ENCODE measurements at regions of chr10 and their contacts with region 1.

Region 1: GRCh38 chr10:71319042-71319799 is at the start of gene SLC29A3:
- DNase-seq: peak; percentile 82 to 91 (median 85)
- H3K4me3 ChIP-seq: peak within 1 kb of the TSS; percentile 58 to 88 (median 81)
- H3K27ac ChIP-seq: peak within 1 kb of the TSS; percentile 7 to 50
- H3K4me1 ChIP-seq: peaks cover 3 to 43% (median 37%) of the 10 kb centered on the region in 4 experiments
- H3K27me3 ChIP-seq: no peaks in the 10 kb centered on the region

Region 2: DNA sequence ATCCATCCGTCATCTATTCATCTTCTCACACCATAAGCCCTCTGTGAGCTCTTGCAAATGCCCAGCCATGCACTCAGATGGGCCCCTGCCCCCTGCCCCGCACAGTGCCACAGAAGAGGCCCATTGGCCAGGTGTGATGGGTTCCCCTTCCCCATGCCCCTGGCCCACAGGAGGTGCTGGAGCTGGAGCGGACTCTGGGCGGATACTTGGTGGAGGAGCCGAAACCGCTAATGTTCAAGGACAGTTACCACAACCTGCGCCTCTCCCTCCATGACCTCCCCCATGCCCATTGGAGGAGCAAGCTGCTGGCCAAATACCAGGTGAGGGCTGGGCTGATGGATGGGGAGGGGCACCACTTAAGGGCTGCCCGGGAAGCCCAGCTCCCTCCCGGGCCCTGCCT is 23.6 kb before region 1 on chr10:
- CTCF ChIA-PET with region 1: no interaction called
- POLR2A ChIA-PET with region 1: no interaction called
- DNase-seq: no peak
- H3K4me3 ChIP-seq: no peak overlapping the region
- H3K27ac ChIP-seq: no peak overlapping the region
- H3K4me1 ChIP-seq: peaks cover 1 to 23% (median 14%) of the 10 kb centered on the region in 4 experiments
- H3K27me3 ChIP-seq: no peaks in the 10 kb centered on the region

Region 3: GRCh38 chr10:71359364-71360046 is 40.3 kb after region 1 on chr10:
- CTCF ChIA-PET with region 1: interaction called, 12 read pairs
- POLR2A ChIA-PET with region 1: no interaction called
- DNase-seq: peak in 2 of 3 donors; percentile 49 to 75
- H3K4me3 ChIP-seq: no peak overlapping the region
- H3K27ac ChIP-seq: peak overlapping the region in 1 of 2 experiments; percentile 4
- H3K4me1 ChIP-seq: peaks cover 0 to 19% (median 5%) of the 10 kb centered on the region in 4 experiments
- H3K27me3 ChIP-seq: no peaks in the 10 kb centered on the region

Region 4: GRCh38 chr10:71378336-71379117 is 59.3 kb after region 1 on chr10:
- CTCF ChIA-PET with region 1: interaction called, 17 read pairs
- POLR2A ChIA-PET with region 1: no interaction called
- DNase-seq: peak; percentile 46 to 72 (median 62)
- H3K4me3 ChIP-seq: no peak overlapping the region
- H3K27ac ChIP-seq: peak overlapping the region in 1 of 2 experiments; percentile 31
- H3K4me1 ChIP-seq: peaks cover 9 to 43% (median 27%) of the 10 kb centered on the region in 4 experiments
- H3K27me3 ChIP-seq: no peaks in the 10 kb centered on the region

Region 5: DNA sequence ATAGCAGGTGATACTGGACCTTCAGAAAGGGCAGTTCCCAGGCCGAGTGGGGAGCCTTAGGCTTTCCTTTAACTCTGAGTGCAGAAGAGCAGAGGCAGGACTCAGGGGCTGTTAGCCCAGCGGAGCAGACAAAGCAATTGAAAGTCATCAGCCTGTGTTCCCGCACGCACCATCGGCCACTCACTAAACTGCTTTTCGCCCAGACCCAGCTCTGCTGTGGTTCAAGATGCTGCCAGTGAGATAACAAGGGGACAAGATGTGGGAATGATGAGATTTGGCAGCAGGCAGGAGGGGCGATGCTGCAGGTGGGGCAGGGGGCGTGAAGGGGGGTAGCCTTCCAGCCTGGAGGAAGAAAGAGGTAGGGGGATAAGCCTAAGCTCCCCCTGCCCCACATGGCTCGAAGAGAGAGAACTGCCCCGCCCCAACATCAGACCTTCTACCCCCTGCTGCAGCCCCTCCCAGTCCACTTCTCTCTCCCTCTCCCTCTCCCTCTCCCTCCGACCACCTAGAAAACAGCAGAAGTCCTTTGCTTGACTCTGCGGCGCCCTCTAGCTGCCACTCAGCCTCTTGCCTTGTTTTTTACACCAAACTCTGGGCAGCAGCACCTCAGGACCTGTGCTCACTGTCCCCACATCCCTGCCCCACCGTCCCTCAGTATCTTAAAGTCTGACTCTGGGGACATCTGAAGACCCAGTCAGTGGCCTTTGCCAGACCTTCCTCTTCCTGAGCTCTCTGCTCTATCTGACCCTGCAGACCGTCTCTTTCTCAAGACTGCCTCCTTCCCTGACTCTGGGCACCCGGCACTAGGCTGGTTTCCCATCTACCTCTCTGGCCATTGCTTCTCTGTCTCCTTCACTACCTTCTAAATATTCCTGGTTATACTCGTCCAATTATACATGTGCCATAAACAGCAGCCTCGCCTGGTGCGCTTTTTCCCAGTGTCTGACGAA is 289.9 kb after region 1 on chr10:
- CTCF ChIA-PET with region 1: interaction called, 11 read pairs
- POLR2A ChIA-PET with region 1: no interaction called
- DNase-seq: peak; percentile 74 to 86 (median 82)
- H3K4me3 ChIP-seq: no peak overlapping the region
- H3K27ac ChIP-seq: no peak overlapping the region
- H3K4me1 ChIP-seq: peaks cover 0 to 9% (median 6%) of the 10 kb centered on the region in 4 experiments
- H3K27me3 ChIP-seq: no peaks in the 10 kb centered on the region

Region 6: GRCh38 chr10:71631007-71631859 is 312.0 kb after region 1 on chr10:
- CTCF ChIA-PET with region 1: no interaction called
- POLR2A ChIA-PET with region 1: no interaction called
- DNase-seq: no peak
- H3K4me3 ChIP-seq: no peak overlapping the region
- H3K27ac ChIP-seq: no peak overlapping the region
- H3K4me1 ChIP-seq: peaks cover 0 to 5% (median 0%) of the 10 kb centered on the region in 4 experiments
- H3K27me3 ChIP-seq: no peaks in the 10 kb centered on the region

Measured in common myeloid progenitor, CD34-positive (primary cell).